HEK293T (cell line): ENCODE measurements at regions of chr12 and their contacts with region 1.

Region 1: GRCh38 chr12:56117778-56118687 is at the start of gene ZC3H10:
- DNase-seq: peak; percentile 92

Region 2: DNA sequence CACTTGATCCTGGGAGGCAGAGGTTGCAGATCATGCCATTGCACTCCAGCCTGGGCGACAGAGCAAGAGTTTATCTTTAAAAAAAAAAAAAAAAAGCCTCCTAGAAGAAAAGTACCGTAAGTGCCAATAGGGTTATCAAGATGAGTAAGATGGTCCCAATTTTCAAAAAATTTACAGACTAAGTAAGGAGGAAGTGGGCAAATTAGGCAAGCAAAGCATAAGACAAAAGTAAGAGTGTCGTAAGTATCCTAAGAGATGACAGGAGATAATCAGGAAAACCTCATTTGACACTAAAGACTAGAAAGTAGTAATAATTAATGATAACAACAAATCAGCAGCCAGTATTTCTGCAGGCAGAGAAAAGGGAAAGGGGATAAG is 202.6 kb before region 1 on chr12:
- CTCF ChIA-PET with region 1: no interaction called
- POLR2A ChIA-PET with region 1: no interaction called
- DNase-seq: no peak

Region 3: GRCh38 chr12:56020423-56021184 is 97.4 kb before region 1 on chr12 and contains the start of gene IKZF4:
- CTCF ChIA-PET with region 1: no interaction called
- POLR2A ChIA-PET with region 1: no interaction called
- DNase-seq: no peak

Region 4: GRCh38 chr12:56078990-56079664 is 38.9 kb before region 1 on chr12:
- CTCF ChIA-PET with region 1: no interaction called
- POLR2A ChIA-PET with region 1: interaction called, 19 read pairs
- DNase-seq: peak; percentile 82

Region 5: DNA sequence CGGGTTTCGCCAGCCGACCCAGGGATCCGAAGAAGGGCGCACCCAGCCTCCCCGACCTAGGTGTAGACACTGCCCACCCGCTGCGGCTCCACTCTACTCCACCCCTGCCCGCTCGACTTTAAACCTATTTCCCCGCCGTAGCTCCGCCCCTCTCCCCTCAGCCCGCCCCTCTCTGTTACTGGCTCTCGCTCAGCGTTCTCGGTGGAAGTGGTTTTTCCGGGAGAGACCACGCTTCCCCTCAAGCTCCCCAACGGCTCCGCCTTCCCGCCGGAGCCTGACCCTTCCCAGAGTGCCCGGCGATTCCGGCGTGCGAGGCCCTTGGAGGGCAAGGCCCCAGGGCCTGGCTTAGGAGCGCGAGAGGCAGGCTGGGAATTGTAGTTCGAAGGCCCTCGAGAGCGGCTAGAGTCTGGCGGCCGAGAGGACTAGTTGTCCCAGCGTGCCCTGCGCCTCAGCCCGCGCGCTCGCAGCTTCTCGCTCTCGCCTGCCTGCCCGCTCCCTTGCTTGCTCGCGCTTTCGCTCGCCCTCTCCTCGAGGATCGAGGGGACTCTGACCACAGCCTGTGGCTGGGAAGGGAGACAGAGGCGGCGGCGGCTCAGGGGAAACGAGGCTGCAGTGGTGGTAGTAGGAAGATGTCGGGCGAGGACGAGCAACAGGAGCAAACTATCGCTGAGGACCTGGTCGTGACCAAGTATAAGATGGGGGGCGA is 13.8 kb before region 1 on chr12 and contains the start of gene PA2G4:
- CTCF ChIA-PET with region 1: interaction called, 3 read pairs
- POLR2A ChIA-PET with region 1: interaction called, 122 read pairs
- DNase-seq: peak; percentile 95

Region 6: GRCh38 chr12:56152318-56153033 is 34.4 kb after region 1 on chr12 and contains the start of gene MYL6B:
- CTCF ChIA-PET with region 1: no interaction called
- POLR2A ChIA-PET with region 1: interaction called, 11 read pairs
- DNase-seq: peak; percentile 90

Region 7: DNA sequence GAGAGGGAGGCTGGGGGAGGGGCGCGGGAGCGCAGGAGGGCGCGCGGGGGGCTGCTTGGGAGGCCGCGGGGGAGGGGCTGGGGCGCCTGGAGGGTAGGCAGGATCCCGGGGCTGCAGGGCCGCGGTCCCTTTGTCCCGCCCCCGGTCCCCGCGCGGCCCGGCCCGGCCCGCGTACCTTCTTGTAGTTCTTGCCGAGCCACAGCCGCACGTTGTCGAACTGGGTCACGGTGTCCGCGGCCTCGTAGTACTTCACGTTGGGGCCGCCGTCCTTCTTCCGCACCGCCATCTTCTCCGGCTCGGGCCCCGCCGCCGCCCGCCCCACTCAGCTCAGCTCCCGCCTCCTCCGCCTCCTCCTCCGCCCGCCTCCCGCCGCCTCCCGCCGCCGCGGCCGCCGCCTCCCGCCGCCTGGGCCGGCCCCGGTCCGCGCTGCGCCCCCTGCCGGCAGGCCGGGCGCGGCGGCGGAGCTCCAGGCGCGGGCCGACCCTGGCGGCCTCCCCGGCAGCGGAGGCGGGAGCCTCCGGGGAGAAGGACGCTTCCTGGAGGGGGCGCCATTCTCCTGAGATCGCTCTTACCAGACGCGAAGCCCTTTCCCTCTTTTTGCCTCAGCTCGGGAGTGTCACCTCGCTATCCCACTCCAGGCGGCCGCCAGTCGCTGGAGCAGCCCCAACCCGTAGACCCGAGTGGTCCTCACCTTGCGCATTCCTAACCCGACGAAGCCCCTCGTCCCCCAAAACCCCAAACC is 71.3 kb after region 1 on chr12 and contains the start of gene SMARCC2:
- CTCF ChIA-PET with region 1: interaction called, 32 read pairs
- POLR2A ChIA-PET with region 1: interaction called, 55 read pairs
- DNase-seq: peak; percentile 91

Region 8: GRCh38 chr12:56213830-56214229 is 95.8 kb after region 1 on chr12:
- CTCF ChIA-PET with region 1: no interaction called
- POLR2A ChIA-PET with region 1: no interaction called
- DNase-seq: no peak

Region 9: DNA sequence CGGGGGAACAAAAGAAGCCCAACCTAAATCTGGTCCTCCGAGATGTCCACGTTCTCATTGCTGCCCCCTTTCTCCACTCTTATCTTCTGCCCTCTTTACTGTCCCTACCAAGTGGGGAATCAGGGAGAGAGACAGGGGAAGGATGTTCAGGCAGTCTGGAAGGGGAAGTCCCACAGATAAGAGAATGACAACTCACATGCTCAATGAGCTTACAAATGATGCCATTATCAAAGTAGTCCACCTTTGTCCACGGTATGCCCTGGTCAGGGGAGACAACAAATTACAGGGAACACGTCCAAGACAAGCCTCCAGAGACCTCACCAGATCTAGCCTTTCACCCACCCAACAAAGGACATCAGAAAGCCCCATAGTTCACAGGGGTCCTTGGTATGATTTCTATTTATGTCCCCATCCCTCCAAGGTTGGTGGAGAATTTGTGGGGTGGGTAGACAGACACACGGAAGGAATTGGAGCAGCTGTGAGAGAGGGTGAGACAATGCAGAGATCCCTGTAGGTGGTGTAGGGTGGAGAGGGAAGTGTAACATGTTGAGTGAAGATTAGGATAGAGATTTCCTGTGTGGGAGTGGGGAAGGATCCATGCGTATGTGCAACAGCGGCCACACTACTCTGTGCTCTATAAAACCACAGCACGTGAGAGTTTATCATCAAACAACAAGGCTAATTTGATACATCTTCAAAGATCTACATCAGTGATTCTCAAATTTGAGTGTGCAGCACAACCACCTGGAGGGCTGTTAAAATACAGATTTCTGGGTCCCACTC is 921.2 kb after region 1 on chr12:
- CTCF ChIA-PET with region 1: no interaction called
- POLR2A ChIA-PET with region 1: no interaction called
- DNase-seq: no peak